Activated CD4-positive, alpha-beta T cell treated with anti-CD3 and anti-CD28 coated beads for 36 hours (primary cell): ENCODE measurements at regions of chr18 and their contacts with region 1.

Region 1: GRCh38 chr18:28189400-28190239 is 12.7 kb upstream of the CDH2 start:
- DNase-seq: peak; percentile 46
- ATAC-seq: no peak
- H3K4me3 Mint-ChIP-seq: no peak overlapping the region
- H3K27ac Mint-ChIP-seq: no peak overlapping the region
- H3K4me1 Mint-ChIP-seq: peaks cover 2% of the 10 kb centered on the region
- H3K27me3 Mint-ChIP-seq: no peaks in the 10 kb centered on the region

Region 2: DNA sequence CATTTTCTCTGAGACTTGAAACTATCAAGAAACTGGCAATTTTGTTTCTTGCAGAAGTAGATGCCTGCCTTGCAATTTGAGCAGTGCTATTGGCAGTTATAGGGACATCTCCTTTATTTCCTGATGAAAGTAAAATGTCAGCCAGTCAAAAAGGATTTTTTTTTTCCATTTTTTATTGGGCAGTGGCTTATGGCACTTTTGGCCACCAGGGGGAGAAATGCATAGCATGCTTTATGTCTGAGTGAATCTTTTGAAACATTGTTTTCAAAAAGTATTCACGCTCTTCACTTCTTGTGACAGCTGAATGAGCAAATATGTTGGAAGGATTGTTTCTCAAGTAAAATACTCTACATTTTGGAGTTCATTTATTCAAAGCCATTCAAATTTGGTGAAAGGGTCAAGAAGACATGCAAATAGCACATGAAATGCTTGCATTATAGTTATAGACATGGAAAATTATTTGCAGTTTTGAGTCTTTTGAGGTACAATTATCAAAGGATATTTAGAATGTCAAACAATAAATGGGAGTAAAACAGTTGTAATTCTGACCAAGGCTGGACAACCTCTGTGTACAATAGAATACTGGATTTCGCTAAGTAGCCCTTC is 503.7 kb before region 1 on chr18:
- CTCF ChIA-PET with region 1: no interaction called
- POLR2A ChIA-PET with region 1: no interaction called
- intact Hi-C with region 1: loop called in 1 of 2 experiments (anchors 5 kb)
- DNase-seq: peak; percentile 23
- ATAC-seq: no peak
- H3K4me3 Mint-ChIP-seq: no peak overlapping the region
- H3K27ac Mint-ChIP-seq: no peak overlapping the region
- H3K4me1 Mint-ChIP-seq: no peaks in the 10 kb centered on the region
- H3K27me3 Mint-ChIP-seq: no peaks in the 10 kb centered on the region